ENCODE measurements at regions of chr10 and their contacts with region 1.

Region 1: DNA sequence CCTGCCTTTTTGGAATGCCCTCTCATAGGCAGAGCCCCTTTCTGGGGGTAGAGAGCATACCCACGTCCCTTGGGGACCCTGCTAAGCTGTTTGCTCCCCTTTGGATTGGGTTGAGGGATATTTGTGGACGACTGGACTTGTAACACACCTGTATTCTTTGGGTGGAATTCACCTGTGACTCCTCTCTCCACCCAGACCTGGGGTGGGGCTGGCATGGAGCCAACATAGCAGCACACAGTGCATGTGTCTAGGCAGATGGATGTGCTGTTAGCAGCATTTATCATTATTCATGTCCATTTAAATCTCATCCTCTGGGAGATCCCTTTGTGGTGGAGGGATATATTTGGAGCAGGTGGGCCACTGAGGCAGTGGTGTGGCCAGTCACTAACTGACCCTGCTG is 51.0 kb downstream of the CDH23 start:
- DNase-seq: no peak
- CTCF ChIP-seq: no peak

Region 2: DNA sequence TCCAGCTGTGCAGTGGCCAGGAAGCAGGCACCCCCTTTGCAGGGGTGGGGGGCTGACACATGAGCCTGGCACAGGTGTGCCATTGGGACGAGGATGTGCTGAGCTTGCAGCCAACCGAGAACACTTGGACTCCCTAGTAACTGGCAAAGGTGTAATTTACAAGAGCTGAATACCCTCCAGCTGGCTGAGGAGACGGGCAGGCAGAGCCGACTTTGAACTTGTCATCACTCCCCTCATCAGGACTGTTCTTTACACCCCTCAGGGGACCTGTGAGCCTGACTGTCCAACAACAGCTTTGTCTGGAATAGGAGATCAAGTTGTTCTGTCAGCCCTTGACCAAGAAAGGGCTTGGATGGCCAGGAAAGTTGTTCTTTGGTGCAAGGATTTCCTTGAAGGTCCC is 10.2 kb after region 1 on chr10:
- CTCF ChIA-PET with region 1: no interaction called
- POLR2A ChIA-PET with region 1: interaction called, 10 read pairs
- DNase-seq: no peak
- CTCF ChIP-seq: no peak